ENCODE measurements at regions of chr11 and their contacts with region 1.

Region 1: DNA sequence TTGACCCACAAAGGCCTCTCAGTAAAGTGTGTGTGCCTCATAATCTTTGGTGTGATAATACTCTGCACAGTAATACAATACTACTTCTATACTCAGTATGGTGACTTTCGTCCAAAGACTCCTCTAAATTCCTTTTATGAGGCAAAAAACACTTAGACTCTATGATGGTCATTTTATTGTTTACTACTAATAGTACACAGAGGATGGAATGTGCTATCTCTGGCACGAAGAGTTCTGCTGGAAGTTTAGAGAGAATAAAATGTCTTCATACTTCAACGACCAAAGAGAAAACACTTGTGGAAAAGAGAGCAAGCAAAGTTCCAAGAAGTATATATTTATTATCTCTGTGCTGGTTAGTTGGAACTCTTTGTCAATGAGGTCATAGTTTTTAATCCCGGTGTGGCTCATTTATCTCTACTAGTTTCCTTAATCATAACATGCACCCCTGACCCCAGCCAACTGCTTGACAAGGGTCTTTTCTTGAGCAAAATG is 7.5 kb upstream of the CSTF3 start:
- DNase-seq: no peak
- H3K4me3 ChIP-seq: no peak overlapping the region
- H3K4me1 ChIP-seq: peaks cover 3% of the 10 kb centered on the region; the same call in 1 of the 2 replicates
- H3K27me3 ChIP-seq: no peaks in the 10 kb centered on the region

Region 2: GRCh38 chr11:33273656-33274055 is 104.9 kb after region 1 on chr11:
- in situ Hi-C with region 1: no loop called
- DNase-seq: no peak
- H3K4me3 ChIP-seq: no peak overlapping the region
- H3K4me1 ChIP-seq: no peaks in the 10 kb centered on the region
- H3K27me3 ChIP-seq: no peaks in the 10 kb centered on the region

Region 3: DNA sequence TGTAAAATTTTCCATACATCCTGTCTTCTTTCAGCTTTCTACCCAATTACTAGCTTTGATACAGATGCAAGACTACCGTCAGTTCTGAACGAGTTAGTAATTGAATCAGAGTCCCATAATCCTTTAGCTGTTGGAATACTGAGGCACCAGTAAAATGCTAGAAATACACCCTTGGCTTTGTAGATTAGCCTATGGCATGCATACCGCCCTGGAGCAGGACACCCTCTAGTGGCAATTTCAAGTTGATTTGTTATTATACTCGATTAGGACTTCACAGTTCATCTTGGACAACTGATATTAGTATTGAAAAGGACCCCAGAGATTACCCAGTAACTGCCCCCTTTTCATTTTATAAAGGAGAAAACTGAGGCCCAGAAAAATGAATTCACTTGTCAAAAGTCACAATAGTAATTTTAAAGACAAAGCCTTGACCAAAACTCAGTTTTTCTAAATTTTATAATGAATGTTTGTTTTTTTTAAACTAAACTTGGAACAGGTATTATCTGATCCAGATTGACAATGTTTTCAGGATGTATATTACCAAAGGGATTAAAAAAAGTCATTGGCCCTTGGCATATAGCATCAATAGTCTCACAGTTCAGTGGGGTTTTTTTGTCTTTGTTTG is 161.1 kb after region 1 on chr11:
- in situ Hi-C with region 1: loop called (anchors 5 kb)
- DNase-seq: peak; percentile 67 to 71
- H3K4me3 ChIP-seq: no peak overlapping the region
- H3K4me1 ChIP-seq: no peaks in the 10 kb centered on the region
- H3K27me3 ChIP-seq: no peaks in the 10 kb centered on the region

Measured in HAP-1 (cell line).